ENCODE measurements at regions of chr20 and their contacts with region 1.

Region 1: GRCh38 chr20:871948-872347 is 38.4 kb downstream of the FAM110A start:
- DNase-seq: no peak
- ATAC-seq: no peak
- H3K4me3 ChIP-seq: no peak overlapping the region
- H3K27ac ChIP-seq: no peak overlapping the region
- H3K4me1 ChIP-seq: no peaks in the 10 kb centered on the region
- H3K27me3 ChIP-seq: peaks cover 11% of the 10 kb centered on the region
- CTCF ChIP-seq: no peak

Region 2: DNA sequence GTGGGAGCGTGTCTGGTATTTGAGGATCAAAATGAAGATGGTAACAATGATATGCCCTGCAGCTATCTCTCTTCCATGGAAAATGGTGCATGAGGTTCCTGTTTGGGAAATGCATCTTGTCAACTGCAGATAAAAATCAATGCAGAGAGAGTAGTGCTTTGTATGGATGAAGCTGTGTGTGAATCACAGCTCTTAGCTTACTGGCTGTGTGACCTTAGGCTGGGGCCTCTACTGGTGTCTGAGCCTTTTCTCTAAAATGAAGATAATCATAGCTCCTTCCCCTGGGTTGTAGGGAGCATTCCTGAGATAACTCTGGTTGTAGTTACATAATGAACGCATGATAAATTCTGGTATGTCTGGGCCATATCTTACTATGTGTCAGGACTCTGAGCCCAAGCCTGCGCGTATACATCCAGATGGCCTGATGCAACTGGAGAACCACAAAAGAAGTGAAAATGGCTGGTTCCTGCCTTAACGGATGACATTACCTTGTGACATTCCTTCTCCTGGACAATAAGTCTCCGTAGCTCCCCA is 24.6 kb after region 1 on chr20:
- CTCF ChIA-PET with region 1: no interaction called
- POLR2A ChIA-PET with region 1: interaction called, 12 read pairs
- intact Hi-C with region 1: no loop called
- DNase-seq: no peak
- ATAC-seq: no peak
- H3K4me3 ChIP-seq: no peak overlapping the region
- H3K27ac ChIP-seq: no peak overlapping the region
- H3K4me1 ChIP-seq: no peaks in the 10 kb centered on the region
- H3K27me3 ChIP-seq: peaks cover 42% of the 10 kb centered on the region
- CTCF ChIP-seq: no peak

Region 3: DNA sequence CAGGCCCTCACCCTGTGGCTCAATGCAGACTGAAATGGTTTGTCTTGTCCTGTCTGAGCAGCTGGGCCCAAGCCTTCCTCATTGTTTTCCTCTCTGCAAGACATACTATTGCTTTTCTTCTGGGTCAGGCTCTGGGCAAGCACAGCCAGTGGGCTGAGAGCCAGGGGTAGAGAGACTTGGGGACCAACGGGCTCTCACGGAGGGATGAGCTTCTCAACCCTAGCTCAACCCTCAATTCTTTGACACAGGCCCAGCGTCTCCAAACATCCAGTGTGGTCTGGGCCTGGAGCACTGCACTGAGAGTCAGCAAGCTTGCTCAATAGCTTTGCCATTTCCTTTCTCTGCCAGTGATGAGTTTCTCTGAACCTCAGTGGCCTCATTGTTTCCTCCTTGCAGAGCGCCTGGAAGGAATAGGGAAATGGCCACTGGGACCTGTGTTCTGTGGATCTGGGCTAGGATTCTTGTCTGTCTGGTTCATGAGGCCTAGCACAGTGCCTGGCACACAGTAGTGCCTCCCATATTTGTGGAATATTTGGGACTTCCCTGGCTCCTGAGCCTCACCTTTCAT is 34.8 kb after region 1 on chr20:
- CTCF ChIA-PET with region 1: no interaction called
- POLR2A ChIA-PET with region 1: no interaction called
- intact Hi-C with region 1: no loop called
- DNase-seq: no peak
- ATAC-seq: no peak
- H3K4me3 ChIP-seq: no peak overlapping the region
- H3K27ac ChIP-seq: no peak overlapping the region
- H3K4me1 ChIP-seq: no peaks in the 10 kb centered on the region
- H3K27me3 ChIP-seq: peaks cover 30% of the 10 kb centered on the region; the same call in 1 of the 2 replicates
- CTCF ChIP-seq: no peak